Thyroid gland (tissue), 4 donors: ENCODE measurements at regions of chr15 and their contacts with region 1.

Region 1: GRCh38 chr15:73081321-73081958 is 29.2 kb downstream of the NEO1 start:
- DNase-seq: peak in 1 of 2 donors; percentile 11
- H3K4me3 ChIP-seq: no peak overlapping the region
- H3K27ac ChIP-seq: no peak overlapping the region
- H3K4me1 ChIP-seq: no peaks in the 10 kb centered on the region
- H3K27me3 ChIP-seq: no peaks in the 10 kb centered on the region
- CTCF ChIP-seq: peak; percentile 12 to 76 (median 60)
- POLR2A ChIP-seq: no peak

Region 2: DNA sequence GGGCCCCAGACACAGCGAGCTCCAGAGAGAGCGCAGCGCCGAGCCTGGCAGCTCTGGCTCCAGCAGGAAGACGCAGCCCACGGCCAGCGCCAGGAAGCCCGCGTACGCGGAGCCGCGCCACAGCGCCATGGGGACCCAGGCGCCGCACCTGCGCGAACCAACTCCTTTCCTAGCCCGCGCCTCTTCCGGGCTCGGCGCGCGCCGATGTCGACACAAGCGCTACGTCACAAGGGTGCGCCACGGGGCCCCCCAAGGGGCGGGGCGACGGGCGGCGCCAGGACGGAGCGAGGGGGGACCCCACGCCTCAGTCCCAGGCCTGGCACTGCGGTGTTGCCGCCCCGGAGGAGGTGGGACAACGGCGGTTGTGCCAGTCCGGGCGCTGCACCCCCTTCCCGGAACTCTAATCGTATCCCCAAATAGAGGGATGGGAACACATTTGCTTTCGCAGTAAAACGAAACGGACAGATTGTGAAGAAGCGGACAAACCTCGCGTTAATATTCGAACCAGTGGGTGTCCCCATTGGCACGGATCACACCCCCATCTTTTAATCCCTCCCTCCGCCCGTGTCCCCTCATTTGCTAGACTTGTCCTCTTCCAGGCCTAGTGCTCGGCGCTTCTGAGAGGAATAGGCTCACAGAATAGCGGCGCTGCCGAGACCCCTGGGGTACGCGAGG is 297.7 kb before region 1 on chr15 and contains the start of gene ADPGK:
- intact Hi-C with region 1: loop called (anchors 5 kb)
- DNase-seq: peak; percentile 92 to 93
- H3K4me3 ChIP-seq: peak within 1 kb of the TSS; percentile 84 to 95 (median 89)
- H3K27ac ChIP-seq: peak within 1 kb of the TSS; percentile 87 to 95 (median 89)
- H3K4me1 ChIP-seq: peaks cover 5 to 18% of the 10 kb centered on the region in 2 donors
- H3K27me3 ChIP-seq: no peaks in the 10 kb centered on the region
- CTCF ChIP-seq: peak in 2 of 6 experiments; percentile 9 to 37
- POLR2A ChIP-seq: peak in 1 of 2 donors; percentile 85
- total RNA-seq, gene ADPGK: 53.0 to 74.6 (median 61.7) TPM

Region 3: DNA sequence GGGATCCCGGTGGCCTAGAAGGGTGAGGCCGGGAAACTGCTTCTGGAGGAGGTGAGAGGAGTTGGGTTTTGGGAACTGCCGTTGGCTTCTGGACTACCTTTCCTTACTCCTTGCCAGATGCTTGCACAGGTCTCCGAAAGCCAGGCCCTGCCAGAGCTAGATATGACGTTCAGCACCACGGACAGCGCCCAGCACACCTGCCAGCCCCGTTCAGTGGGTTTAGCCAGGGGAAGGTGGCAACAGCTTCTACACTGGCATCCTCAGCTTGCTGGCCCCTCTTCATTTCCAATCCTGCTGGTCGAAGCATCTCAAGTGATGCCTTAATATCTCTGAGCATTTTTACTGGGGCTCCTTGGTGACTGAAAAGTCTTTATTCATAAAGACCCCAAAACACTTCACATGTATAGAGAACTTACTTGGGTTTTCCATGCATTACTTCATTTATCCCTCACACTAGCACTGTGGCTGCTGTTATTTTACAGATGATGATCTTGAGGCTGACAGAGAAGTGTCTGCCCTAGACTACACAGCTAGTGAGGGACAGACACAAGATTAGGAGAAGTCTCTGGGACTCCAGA is 265.4 kb after region 1 on chr15:
- intact Hi-C with region 1: no loop called
- DNase-seq: peak; percentile 81 to 91
- H3K4me3 ChIP-seq: no peak overlapping the region
- H3K27ac ChIP-seq: no peak overlapping the region
- H3K4me1 ChIP-seq: peaks cover 4 to 11% of the 10 kb centered on the region in 2 donors
- H3K27me3 ChIP-seq: no peaks in the 10 kb centered on the region
- CTCF ChIP-seq: no peak
- POLR2A ChIP-seq: no peak